BJ (cell line): ENCODE measurements at regions of chr3 and their contacts with region 1.

Region 1: GRCh38 chr3:116166121-116166520 is 279.2 kb downstream of the LSAMP start:
- DNase-seq: no peak
- H3K4me3 ChIP-seq: no peak overlapping the region
- H3K27me3 ChIP-seq: no peaks in the 10 kb centered on the region
- CTCF ChIP-seq: no peak

Region 2: GRCh38 chr3:116238846-116239565 is 72.9 kb after region 1 on chr3:
- CTCF ChIA-PET with region 1: interaction called, 3 read pairs
- POLR2A ChIA-PET with region 1: interaction called, 10 read pairs
- DNase-seq: no peak
- H3K4me3 ChIP-seq: no peak overlapping the region
- H3K27me3 ChIP-seq: no peaks in the 10 kb centered on the region
- CTCF ChIP-seq: no peak